Activated CD4-positive, alpha-beta memory T cell treated with anti-CD3 and anti-CD28 coated beads for 36 hours (primary cell): ENCODE measurements at regions of chr1 and their contacts with region 1.

Region 1: GRCh38 chr1:89524369-89525168 is at the start of gene LRRC8B:
- DNase-seq: peak; percentile 93
- H3K4me3 Mint-ChIP-seq: no peak within 1 kb of the TSS
- H3K27ac Mint-ChIP-seq: no peak within 1 kb of the TSS
- H3K4me1 Mint-ChIP-seq: peaks cover 31% of the 10 kb centered on the region
- H3K27me3 Mint-ChIP-seq: no peaks in the 10 kb centered on the region
- total RNA-seq, gene LRRC8B: 41.1 to 42.1 TPM

Region 2: DNA sequence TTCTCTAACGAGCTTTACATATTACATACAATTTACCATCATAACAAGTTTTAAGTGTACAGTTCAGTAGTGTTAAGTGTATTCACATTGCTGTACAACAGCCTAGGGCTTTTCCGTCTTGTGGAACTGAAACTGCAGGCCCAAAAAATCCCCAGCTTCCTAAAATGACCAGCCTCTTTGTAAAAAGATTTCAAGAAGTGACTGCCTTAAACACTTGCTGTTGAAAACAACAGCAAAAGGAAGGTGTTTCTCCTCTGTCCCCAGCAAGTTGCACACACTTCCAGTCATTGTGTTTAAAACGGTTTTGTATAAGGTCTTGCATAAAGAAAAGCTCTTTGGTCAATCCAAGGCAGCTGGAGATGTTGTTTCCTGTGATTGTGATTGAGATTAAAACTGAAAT is 443.6 kb before region 1 on chr1:
- CTCF ChIA-PET with region 1: no interaction called
- POLR2A ChIA-PET with region 1: no interaction called
- intact Hi-C with region 1: no loop called
- DNase-seq: no peak
- H3K4me3 Mint-ChIP-seq: no peak overlapping the region
- H3K27ac Mint-ChIP-seq: no peak overlapping the region
- H3K4me1 Mint-ChIP-seq: no peaks in the 10 kb centered on the region
- H3K27me3 Mint-ChIP-seq: no peaks in the 10 kb centered on the region

Region 3: DNA sequence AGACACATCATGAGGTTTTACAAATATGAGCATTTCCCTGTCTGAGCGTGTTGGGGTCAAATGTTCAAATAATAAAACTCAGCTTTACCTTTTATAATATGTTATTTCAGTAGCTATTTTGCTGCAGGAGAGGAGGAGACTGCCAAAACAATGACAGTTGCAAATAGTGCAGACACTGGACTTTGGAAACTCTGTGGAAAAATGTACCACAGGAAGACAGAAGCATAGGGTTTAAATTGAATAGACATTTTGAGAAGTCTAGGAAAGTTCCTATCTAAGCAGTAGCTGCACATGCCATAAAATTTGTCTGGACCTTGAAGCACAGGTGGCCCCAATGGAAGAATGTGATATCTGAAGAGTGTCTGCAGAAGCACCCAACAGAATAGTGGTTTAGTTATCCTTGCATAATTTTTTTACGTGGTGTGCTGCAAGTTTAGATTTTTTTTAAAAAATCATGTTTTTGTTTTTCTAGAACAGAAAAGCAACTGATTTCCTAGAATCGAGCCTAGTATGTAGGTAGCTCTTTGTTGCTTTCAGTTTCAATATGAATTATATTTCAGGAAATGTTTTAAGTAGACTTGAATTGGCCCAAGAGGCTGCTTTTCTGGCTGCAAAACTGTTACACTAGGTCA is 237.9 kb before region 1 on chr1:
- CTCF ChIA-PET with region 1: no interaction called
- POLR2A ChIA-PET with region 1: no interaction called
- intact Hi-C with region 1: no loop called
- DNase-seq: no peak
- H3K4me3 Mint-ChIP-seq: peak overlapping the region; percentile 38
- H3K27ac Mint-ChIP-seq: peak overlapping the region; percentile 78
- H3K4me1 Mint-ChIP-seq: peaks cover 65% of the 10 kb centered on the region
- H3K27me3 Mint-ChIP-seq: no peaks in the 10 kb centered on the region

Region 4: GRCh38 chr1:89538361-89538760 is 13.8 kb after region 1 on chr1:
- CTCF ChIA-PET with region 1: interaction called, 3 read pairs
- POLR2A ChIA-PET with region 1: interaction called, 9 read pairs
- intact Hi-C with region 1: loop called (anchors 1 kb)
- DNase-seq: peak; percentile 31
- H3K4me3 Mint-ChIP-seq: no peak overlapping the region
- H3K27ac Mint-ChIP-seq: peak overlapping the region; percentile 92
- H3K4me1 Mint-ChIP-seq: peaks cover 83% of the 10 kb centered on the region
- H3K27me3 Mint-ChIP-seq: no peaks in the 10 kb centered on the region

Region 5: GRCh38 chr1:89547563-89548485 is 23.3 kb after region 1 on chr1:
- CTCF ChIA-PET with region 1: no interaction called
- POLR2A ChIA-PET with region 1: interaction called, 6 read pairs
- intact Hi-C with region 1: loop called (anchors 1 kb)
- DNase-seq: peak; percentile 71
- H3K4me3 Mint-ChIP-seq: peak overlapping the region; percentile 30
- H3K27ac Mint-ChIP-seq: peak overlapping the region; percentile 85
- H3K4me1 Mint-ChIP-seq: peaks cover 88% of the 10 kb centered on the region
- H3K27me3 Mint-ChIP-seq: no peaks in the 10 kb centered on the region

Region 6: DNA sequence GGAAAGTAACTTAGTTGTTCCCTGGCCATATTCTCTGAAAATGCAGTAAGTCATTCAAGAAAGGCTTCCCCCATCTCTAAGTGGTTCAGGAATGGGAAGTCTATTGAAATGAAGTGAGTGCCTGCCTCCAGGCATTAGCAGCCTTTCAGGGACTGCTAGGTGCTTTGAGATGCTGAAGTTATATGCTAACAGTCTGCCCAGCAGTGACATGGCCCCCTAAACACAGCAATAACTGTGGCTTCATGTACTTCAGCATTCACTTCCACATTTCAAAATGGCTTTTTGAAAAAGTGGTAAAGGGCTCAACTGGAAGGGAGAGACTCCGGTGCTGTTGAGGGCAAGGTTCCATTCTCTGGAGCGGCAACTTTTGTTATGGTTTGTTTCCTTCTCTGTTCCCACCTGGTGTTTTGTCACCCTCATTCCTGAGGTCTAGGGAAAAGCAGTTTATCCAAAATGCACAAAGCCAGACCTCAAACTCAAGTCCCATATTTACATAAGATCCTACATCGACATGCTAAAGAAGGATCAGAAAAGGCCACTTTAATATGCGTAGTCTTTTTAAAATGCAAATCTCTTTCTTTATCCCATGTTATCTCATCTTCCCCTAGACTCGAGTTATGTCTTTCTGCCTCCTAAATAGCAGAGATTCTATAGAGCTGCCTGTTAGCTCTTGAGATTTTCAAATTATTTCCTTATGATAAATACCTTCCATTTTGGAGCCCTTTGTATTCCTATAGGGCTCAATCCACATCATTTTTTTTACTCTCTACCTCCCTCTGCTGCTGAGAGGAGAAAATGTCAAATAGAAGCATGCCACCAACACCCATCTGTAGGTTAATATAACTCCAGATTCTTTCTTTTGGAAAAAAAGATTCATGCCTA is 74.1 kb after region 1 on chr1:
- CTCF ChIA-PET with region 1: interaction called, 10 read pairs
- POLR2A ChIA-PET with region 1: interaction called, 10 read pairs
- intact Hi-C with region 1: loop called (anchors 1 kb)
- DNase-seq: no peak
- H3K4me3 Mint-ChIP-seq: no peak overlapping the region
- H3K27ac Mint-ChIP-seq: peak overlapping the region; percentile 64
- H3K4me1 Mint-ChIP-seq: peaks cover 84% of the 10 kb centered on the region
- H3K27me3 Mint-ChIP-seq: no peaks in the 10 kb centered on the region

Region 7: GRCh38 chr1:89615676-89616598 is 91.4 kb after region 1 on chr1:
- CTCF ChIA-PET with region 1: interaction called, 3 read pairs
- POLR2A ChIA-PET with region 1: no interaction called
- intact Hi-C with region 1: loop called (anchors 1 kb)
- DNase-seq: peak; percentile 33
- H3K4me3 Mint-ChIP-seq: no peak overlapping the region
- H3K27ac Mint-ChIP-seq: no peak overlapping the region
- H3K4me1 Mint-ChIP-seq: peaks cover 82% of the 10 kb centered on the region
- H3K27me3 Mint-ChIP-seq: no peaks in the 10 kb centered on the region

Region 8: GRCh38 chr1:89670163-89670562 is 145.6 kb after region 1 on chr1:
- CTCF ChIA-PET with region 1: no interaction called
- POLR2A ChIA-PET with region 1: no interaction called
- intact Hi-C with region 1: loop called (anchors 5 kb)
- DNase-seq: no peak
- H3K4me3 Mint-ChIP-seq: peak overlapping the region; percentile 53
- H3K27ac Mint-ChIP-seq: peak overlapping the region; percentile 66
- H3K4me1 Mint-ChIP-seq: peaks cover 93% of the 10 kb centered on the region
- H3K27me3 Mint-ChIP-seq: no peaks in the 10 kb centered on the region

Region 9: GRCh38 chr1:89994805-89995597 is 470.4 kb after region 1 on chr1 and contains the start of gene ZNF326:
- CTCF ChIA-PET with region 1: no interaction called
- POLR2A ChIA-PET with region 1: no interaction called
- intact Hi-C with region 1: loop called (anchors 5 kb)
- DNase-seq: peak; percentile 96
- H3K4me3 Mint-ChIP-seq: peak within 1 kb of the TSS; percentile 99
- H3K27ac Mint-ChIP-seq: peak within 1 kb of the TSS; percentile 89
- H3K4me1 Mint-ChIP-seq: peaks cover 39% of the 10 kb centered on the region
- H3K27me3 Mint-ChIP-seq: no peaks in the 10 kb centered on the region
- total RNA-seq, gene ZNF326: 17.2 to 17.3 TPM